Mammary epithelial cell (primary cell): ENCODE measurements at regions of chr6 and their contacts with region 1.

Region 1: GRCh38 chr6:132669690-132670291 is 10.8 kb upstream of the TAAR1 start:
- DNase-seq: peak; percentile 21
- H3K4me3 ChIP-seq: no peak overlapping the region
- H3K27ac ChIP-seq: no peak overlapping the region
- H3K4me1 ChIP-seq: no peaks in the 10 kb centered on the region
- H3K27me3 ChIP-seq: no peaks in the 10 kb centered on the region
- CTCF ChIP-seq: peak; percentile 44 to 45

Region 2: GRCh38 chr6:132607544-132608233 is 62.1 kb before region 1 on chr6:
- CTCF ChIA-PET with region 1: no interaction called
- dilution Hi-C with region 1: no loop called
- in situ Hi-C with region 1: no loop called
- intact Hi-C with region 1: no loop called
- DNase-seq: no peak
- H3K4me3 ChIP-seq: no peak overlapping the region
- H3K27ac ChIP-seq: no peak overlapping the region
- H3K4me1 ChIP-seq: peaks cover 8% of the 10 kb centered on the region
- H3K27me3 ChIP-seq: no peaks in the 10 kb centered on the region
- CTCF ChIP-seq: no peak

Region 3: DNA sequence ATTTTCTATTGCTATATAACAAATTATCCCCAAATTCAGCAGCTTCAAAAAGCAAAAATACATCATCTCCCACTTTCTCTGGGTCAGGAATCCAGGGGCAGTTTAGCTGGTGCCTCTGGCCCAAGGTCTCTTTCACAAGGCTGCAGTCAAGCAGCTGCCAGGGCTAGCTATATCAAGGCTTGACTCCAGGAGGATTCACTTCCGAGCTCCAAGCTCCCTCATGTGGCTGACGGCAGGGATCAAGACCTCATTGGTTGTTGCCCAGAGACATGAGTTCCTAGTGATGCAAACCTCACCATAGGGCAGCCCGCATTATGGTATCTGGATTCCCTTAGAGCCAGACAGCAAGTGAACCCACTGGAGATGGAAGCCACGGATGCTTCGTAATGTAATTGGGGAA is 45.4 kb after region 1 on chr6:
- CTCF ChIA-PET with region 1: interaction called, 17 read pairs
- dilution Hi-C with region 1: no loop called
- in situ Hi-C with region 1: no loop called
- intact Hi-C with region 1: loop called (anchors 1 kb)
- DNase-seq: peak; percentile 64
- H3K4me3 ChIP-seq: no peak overlapping the region
- H3K27ac ChIP-seq: no peak overlapping the region
- H3K4me1 ChIP-seq: no peaks in the 10 kb centered on the region
- H3K27me3 ChIP-seq: no peaks in the 10 kb centered on the region
- CTCF ChIP-seq: peak; percentile 69 to 78

Region 4: DNA sequence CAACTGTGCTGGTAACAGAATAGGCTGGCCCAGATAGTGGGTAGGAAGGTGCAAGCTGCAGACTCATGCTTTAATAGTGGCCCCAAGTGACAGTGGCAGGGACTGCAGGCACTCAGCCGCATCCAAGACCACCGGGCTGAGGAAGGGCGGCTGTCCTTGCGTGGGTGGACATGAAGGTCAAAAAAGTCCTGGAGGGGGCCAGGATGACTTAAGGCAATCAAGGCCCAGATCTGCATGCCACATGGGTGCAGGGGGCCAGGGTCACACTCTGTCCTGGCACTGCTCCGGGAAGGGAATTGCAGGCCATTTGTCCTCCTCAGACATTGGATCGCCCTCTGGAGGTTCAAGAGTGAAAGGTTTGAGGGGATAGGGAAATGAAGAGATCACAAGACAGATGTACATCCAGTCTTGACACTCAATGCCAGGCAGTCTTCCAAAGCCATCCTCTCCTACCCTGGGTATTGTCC is 98.3 kb after region 1 on chr6:
- CTCF ChIA-PET with region 1: no interaction called
- dilution Hi-C with region 1: no loop called
- in situ Hi-C with region 1: no loop called
- intact Hi-C with region 1: loop called (anchors 1 kb)
- DNase-seq: peak; percentile 43
- H3K4me3 ChIP-seq: no peak overlapping the region
- H3K27ac ChIP-seq: no peak overlapping the region
- H3K4me1 ChIP-seq: peaks cover 13% of the 10 kb centered on the region
- H3K27me3 ChIP-seq: no peaks in the 10 kb centered on the region
- CTCF ChIP-seq: peak; percentile 40 to 47

Region 5: DNA sequence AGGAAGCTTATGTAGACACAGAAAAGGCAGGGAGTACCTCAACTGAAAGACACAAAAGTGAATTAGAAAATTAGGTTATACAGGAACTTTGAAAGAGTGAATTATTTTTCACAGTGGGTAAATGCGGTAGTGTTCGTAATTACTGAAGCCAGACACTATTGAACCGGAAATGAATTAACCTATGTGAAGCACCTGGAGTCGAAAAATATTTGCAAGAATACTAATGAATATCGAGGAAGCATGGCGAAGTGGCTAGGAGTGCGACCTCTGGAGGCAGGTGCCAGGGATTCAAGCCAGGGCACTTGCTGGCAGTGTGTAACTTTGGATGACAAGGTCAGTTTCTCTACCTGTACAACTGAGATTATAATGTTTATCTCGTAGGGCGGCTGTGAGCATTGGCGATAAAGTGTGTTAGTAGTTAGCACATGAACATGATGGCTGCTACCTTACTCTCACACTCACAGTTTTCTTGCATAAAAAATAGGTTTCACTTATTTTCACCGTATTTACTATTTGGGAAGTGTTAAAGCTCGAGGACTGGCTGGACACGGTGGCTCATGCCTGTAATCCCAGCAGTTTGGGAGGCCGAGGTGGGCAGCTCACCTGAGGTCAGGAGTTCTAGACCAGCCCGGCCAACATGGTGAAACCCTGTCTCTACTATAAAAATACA is 129.2 kb after region 1 on chr6:
- CTCF ChIA-PET with region 1: no interaction called
- dilution Hi-C with region 1: no loop called
- in situ Hi-C with region 1: loop called in 1 of 2 experiments (anchors 25 kb)
- intact Hi-C with region 1: loop called (anchors 1 kb)
- DNase-seq: peak; percentile 72
- H3K4me3 ChIP-seq: peak overlapping the region; percentile 77 to 92 (median 91)
- H3K27ac ChIP-seq: no peak overlapping the region
- H3K4me1 ChIP-seq: no peaks in the 10 kb centered on the region
- H3K27me3 ChIP-seq: no peaks in the 10 kb centered on the region
- CTCF ChIP-seq: peak; percentile 89 to 95

Region 6: DNA sequence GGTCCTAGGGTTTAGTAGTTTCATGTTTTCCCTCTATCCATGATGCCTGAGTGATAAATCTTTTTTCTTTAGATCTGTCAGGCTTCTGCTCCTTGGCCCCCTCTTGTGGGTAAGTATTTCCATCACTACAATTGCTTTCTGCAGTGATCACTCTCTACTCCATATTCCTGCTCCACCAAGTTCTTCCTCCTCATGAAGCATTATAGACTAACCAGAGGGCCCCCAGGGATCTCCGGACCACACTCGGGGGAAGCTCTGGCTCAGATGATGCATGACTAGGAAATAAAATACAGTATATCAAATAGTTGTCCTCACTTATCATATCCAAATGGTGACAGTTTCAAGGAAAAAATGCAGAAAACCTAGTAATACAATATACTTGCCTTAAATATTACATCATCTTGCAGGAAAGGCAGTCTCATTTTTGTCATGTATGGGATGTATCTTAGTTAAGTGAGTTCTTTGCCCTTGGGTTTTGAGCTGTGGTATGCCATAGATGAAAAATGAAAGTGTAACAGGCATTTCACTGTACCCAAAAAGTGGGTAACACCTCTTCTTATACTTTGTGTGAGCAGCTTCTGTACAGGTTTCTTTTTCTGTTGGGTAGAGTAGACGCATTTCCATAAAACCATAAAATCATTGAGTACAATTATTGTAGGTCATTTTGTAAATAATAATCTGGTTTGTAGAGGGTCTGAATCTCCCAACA is 370.5 kb after region 1 on chr6:
- CTCF ChIA-PET with region 1: no interaction called
- dilution Hi-C with region 1: no loop called
- in situ Hi-C with region 1: no loop called
- intact Hi-C with region 1: no loop called
- DNase-seq: peak; percentile 6
- H3K4me3 ChIP-seq: no peak overlapping the region
- H3K27ac ChIP-seq: no peak overlapping the region
- H3K4me1 ChIP-seq: no peaks in the 10 kb centered on the region
- H3K27me3 ChIP-seq: peaks cover 2% of the 10 kb centered on the region
- CTCF ChIP-seq: peak; percentile 29 to 64

Region 7: GRCh38 chr6:133352046-133352445 is 682.3 kb after region 1 on chr6:
- CTCF ChIA-PET with region 1: no interaction called
- dilution Hi-C with region 1: no loop called
- in situ Hi-C with region 1: no loop called
- intact Hi-C with region 1: no loop called
- DNase-seq: no peak
- H3K4me3 ChIP-seq: no peak overlapping the region
- H3K27ac ChIP-seq: no peak overlapping the region
- H3K4me1 ChIP-seq: no peaks in the 10 kb centered on the region
- H3K27me3 ChIP-seq: peaks cover 4% of the 10 kb centered on the region
- CTCF ChIP-seq: no peak